Activated B cell treated with CpG ODN at 0.5 μM for 24 hours (primary cell): ENCODE measurements at regions of chr1 and their contacts with region 1.

Region 1: DNA sequence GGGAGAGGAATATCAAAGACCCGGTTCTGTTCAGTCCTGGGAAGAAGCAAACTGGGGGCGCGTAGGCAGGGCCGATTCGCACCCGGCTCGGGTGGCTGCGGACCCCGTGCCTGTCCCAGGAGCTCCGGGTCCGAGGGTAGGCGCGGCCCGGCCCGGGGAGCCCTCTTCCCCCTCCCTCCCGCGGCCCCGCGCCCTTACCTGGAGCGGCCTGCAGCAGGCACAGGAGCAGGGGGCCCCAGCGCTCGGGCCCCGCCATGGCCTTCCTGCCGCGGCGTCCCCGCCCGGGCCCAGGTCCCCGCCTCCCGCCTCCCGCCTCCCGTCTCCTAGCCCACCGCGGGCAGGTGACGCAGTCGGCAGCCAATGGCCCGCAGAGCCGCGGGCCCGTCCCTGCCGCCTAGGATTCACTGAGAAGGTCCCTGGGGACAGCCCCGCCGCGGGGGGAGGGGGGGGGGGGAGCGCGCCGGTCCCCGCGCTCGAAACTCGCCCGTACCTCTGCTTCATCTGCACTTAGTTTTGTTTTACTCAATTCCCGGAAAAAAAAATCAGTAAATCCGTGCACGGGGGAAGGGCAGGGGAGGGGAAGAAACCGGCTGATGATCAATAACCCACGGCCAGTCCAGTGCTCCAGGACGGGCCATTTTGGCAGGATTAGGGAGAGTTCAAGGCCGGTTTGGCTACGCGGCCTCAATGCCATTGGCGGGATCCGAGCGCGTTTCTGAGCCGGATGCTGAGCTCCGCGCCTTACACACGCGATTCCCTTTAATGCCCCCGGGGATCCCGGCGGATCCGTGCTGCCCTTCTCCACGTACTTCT is at the start of gene IFNLR1:
- DNase-seq: peak; percentile 73
- ATAC-seq: peak; percentile 56
- H3K4me3 Mint-ChIP-seq: peak within 1 kb of the TSS; percentile 92
- H3K27ac Mint-ChIP-seq: peak within 1 kb of the TSS; percentile 98
- H3K4me1 Mint-ChIP-seq: peaks cover 82% of the 10 kb centered on the region
- H3K27me3 Mint-ChIP-seq: no peaks in the 10 kb centered on the region
- CTCF ChIP-seq: no peak
- total RNA-seq, gene IFNLR1: 38.6 and 39.2 TPM in 2 replicates

Region 2: GRCh38 chr1:24150234-24151174 is 36.7 kb before region 1 on chr1:
- CTCF ChIA-PET with region 1: interaction called, 27 read pairs
- POLR2A ChIA-PET with region 1: interaction called, 96 read pairs
- intact Hi-C with region 1: loop called (anchors 1 kb)
- DNase-seq: peak; percentile 89
- ATAC-seq: peak; percentile 98
- H3K4me3 Mint-ChIP-seq: peak overlapping the region; percentile 74
- H3K27ac Mint-ChIP-seq: peak overlapping the region; percentile 20
- H3K4me1 Mint-ChIP-seq: peaks cover 27% of the 10 kb centered on the region
- H3K27me3 Mint-ChIP-seq: peaks cover 3% of the 10 kb centered on the region
- CTCF ChIP-seq: no peak

Region 3: GRCh38 chr1:24321697-24322469 is 134.7 kb after region 1 on chr1:
- CTCF ChIA-PET with region 1: no interaction called
- POLR2A ChIA-PET with region 1: interaction called, 20 read pairs
- intact Hi-C with region 1: loop called (anchors 5 kb)
- DNase-seq: peak; percentile 59
- ATAC-seq: peak; percentile 77
- H3K4me3 Mint-ChIP-seq: peak overlapping the region; percentile 83
- H3K27ac Mint-ChIP-seq: peak overlapping the region; percentile 72
- H3K4me1 Mint-ChIP-seq: peaks cover 49% of the 10 kb centered on the region
- H3K27me3 Mint-ChIP-seq: peaks cover 34% of the 10 kb centered on the region
- CTCF ChIP-seq: no peak

Region 4: GRCh38 chr1:24391882-24392603 is 204.8 kb after region 1 on chr1:
- CTCF ChIA-PET with region 1: interaction called, 57 read pairs
- POLR2A ChIA-PET with region 1: interaction called, 49 read pairs
- intact Hi-C with region 1: loop called (anchors 1 kb)
- DNase-seq: peak; percentile 56
- ATAC-seq: peak; percentile 77
- H3K4me3 Mint-ChIP-seq: peak overlapping the region; percentile 82
- H3K27ac Mint-ChIP-seq: peak overlapping the region; percentile 96
- H3K4me1 Mint-ChIP-seq: peaks cover 43% of the 10 kb centered on the region
- H3K27me3 Mint-ChIP-seq: no peaks in the 10 kb centered on the region
- CTCF ChIP-seq: no peak

Region 5: GRCh38 chr1:24536391-24536840 is 349.2 kb after region 1 on chr1:
- CTCF ChIA-PET with region 1: no interaction called
- POLR2A ChIA-PET with region 1: interaction called, 11 read pairs
- intact Hi-C with region 1: loop called (anchors 2 kb)
- DNase-seq: peak; percentile 51
- ATAC-seq: peak; percentile 73
- H3K4me3 Mint-ChIP-seq: peak overlapping the region; percentile 81
- H3K27ac Mint-ChIP-seq: peak overlapping the region; percentile 99
- H3K4me1 Mint-ChIP-seq: peaks cover 74% of the 10 kb centered on the region
- H3K27me3 Mint-ChIP-seq: no peaks in the 10 kb centered on the region
- CTCF ChIP-seq: no peak

Region 6: DNA sequence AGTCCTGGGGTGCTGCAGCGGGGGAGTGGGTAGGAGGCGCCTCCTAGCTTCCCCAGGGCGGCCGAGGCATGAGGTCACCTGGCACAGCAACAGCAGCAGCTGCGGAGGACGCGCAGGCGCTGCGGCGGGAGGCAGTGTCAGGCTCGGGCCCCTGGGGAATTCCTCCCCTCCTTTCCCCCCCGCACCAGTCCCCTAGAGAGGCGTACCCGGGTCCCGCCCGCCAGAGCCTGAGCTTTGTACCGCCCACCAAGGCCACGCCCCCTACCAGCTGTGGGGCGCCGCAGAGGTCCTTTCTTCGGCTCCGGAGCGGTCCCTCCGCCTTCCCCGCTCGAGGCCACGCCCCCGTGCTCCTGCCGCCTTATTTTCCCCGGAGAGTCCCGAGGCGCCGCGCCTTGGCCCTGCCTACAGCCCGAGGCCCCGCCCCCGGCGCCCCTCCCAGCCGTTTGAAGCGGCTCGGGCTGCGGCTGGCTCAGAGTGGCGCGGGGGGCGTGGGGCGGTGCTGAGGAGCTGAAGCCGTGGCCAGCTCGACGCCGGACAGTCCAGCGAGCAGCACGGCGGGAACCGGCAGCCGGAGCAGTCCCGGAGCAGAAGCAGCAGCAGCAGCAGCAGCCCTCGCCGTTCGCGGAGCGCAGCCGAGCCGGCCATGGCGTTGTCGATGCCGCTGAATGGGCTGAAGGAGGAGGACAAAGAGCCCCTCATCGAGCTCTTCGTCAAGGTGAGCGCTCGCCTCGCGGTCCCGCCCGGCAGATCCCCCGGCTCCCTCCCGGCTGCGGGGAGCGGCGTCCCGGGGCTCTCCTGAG is 557.9 kb after region 1 on chr1 and contains the start of gene CLIC4:
- CTCF ChIA-PET with region 1: no interaction called
- POLR2A ChIA-PET with region 1: interaction called, 8 read pairs
- intact Hi-C with region 1: loop called (anchors 2 kb)
- DNase-seq: peak; percentile 99
- ATAC-seq: peak; percentile 78
- H3K4me3 Mint-ChIP-seq: peak within 1 kb of the TSS; percentile 95
- H3K27ac Mint-ChIP-seq: peak within 1 kb of the TSS; percentile 99
- H3K4me1 Mint-ChIP-seq: peaks cover 73% of the 10 kb centered on the region
- H3K27me3 Mint-ChIP-seq: no peaks in the 10 kb centered on the region
- CTCF ChIP-seq: no peak
- total RNA-seq, gene CLIC4: 98.2 and 99.8 TPM in 2 replicates

Region 7: DNA sequence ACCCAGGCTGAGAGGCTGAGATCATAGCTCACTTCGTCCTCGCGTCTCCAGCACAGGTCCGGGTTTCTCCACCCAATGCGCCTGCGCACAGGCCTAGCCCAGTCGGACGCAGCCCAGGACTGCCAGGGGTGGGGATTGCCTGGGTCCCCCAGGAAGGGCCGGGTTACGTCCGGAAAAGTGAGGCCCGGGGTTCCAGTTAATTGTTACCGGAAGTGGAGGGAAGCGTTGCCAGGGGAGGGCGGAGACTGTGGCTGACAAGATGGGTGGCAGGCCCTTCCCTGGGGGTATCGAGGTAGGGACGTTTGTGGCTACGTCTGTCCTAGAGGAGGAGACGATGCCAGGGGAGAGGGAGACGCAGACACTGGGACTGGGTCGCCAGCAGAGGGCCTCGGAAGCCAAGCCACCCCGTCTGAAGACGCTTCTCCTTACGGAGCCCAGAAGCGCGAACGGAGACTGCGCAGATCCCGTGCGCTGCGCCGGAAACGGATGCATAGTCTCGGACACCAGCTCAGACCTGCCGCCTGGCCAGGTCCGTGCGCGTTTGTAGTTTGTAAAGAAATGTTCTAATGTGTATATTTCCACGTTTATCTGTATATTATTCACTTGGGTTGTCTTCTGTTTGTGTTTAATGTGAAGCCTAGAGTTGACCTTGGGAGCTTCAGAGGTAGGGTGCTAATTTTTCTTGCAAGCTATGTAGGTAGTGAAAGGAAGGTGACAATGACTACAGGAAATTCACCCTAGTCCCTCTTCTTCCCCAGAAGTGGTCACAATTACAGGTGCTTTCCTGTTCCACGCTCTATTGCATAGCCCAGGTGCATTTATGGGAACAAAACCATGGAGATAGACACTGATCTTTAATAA is 1052.7 kb after region 1 on chr1:
- CTCF ChIA-PET with region 1: no interaction called
- POLR2A ChIA-PET with region 1: no interaction called
- intact Hi-C with region 1: loop called (anchors 5 kb)
- DNase-seq: peak; percentile 79
- ATAC-seq: peak; percentile 87
- H3K4me3 Mint-ChIP-seq: peak overlapping the region; percentile 96
- H3K27ac Mint-ChIP-seq: peak overlapping the region; percentile 97
- H3K4me1 Mint-ChIP-seq: peaks cover 66% of the 10 kb centered on the region
- H3K27me3 Mint-ChIP-seq: no peaks in the 10 kb centered on the region
- CTCF ChIP-seq: no peak